GM13976 (cell line): ENCODE measurements at regions of chr5 and their contacts with region 1.

Region 1: DNA sequence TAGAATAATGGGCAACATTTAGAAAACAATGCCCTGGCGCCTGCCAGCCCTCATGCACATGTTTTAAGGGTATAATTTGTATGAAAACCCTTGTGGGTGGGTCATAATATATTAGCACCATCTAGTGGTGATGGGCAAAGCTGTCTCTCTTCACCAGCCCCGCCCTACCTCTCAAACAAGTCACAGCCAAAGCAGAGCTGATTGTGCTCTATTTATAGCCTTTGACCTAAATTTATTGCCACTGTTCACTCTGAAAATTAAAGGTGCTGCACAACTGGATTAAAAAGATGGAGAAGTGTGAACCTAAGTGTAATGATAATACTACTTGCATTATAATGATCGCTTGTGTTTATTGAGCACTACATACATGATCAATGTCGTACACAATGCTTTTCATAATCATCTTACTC is 131.9 kb upstream of the ANKH start:
- DNase-seq: peak; percentile 65
- CTCF ChIP-seq: peak; percentile 74

Region 2: GRCh38 chr5:14720236-14720971 is 283.1 kb before region 1 on chr5:
- in situ Hi-C with region 1: loop called (anchors 5 kb)
- DNase-seq: no peak
- CTCF ChIP-seq: no peak

Region 3: GRCh38 chr5:14946815-14947640 is 56.5 kb before region 1 on chr5:
- in situ Hi-C with region 1: no loop called
- DNase-seq: peak; percentile 34
- CTCF ChIP-seq: no peak

Region 4: GRCh38 chr5:15132434-15133405 is 129.2 kb after region 1 on chr5:
- in situ Hi-C with region 1: no loop called
- DNase-seq: no peak
- CTCF ChIP-seq: no peak

Region 5: DNA sequence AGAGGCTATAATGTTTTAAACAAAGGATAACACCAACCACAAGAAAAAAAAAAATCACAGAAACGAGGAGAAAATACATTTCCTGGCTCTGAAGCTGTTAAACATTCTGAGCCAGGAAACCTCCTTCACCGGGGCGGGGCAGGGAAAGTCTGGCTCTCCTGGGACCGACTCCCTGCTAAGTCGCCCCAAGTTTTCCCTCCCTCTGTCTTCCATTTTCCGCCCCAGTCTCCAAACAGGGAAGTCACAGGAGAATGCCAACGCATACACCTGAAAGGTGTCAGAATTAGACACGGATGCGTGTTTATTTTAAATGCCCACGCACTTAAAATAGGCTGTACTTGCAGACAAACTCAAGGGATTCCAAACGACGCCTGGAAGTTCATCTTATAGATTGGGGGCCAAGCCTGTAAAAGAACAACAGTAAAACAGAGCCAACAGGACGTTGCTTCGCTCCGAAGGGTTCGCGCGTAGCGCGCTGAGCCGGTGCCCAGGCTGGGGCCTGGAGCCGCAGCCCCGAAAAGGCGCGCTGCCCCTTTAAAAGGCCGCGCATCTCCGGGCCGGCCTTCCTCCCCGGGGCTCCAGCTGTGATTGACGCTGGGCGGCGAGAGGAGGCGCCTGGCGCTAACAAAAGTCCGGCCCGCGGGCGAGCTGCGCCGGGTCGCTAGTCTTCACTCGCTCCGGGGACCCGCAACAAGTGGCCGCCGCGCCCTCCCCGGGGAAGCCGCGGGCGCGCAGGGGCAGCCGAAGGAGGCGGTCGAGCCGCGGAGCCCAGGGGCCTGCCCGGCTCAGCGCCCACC is 496.2 kb after region 1 on chr5 and contains the start of gene FBXL7:
- in situ Hi-C with region 1: no loop called
- DNase-seq: peak; percentile 39
- CTCF ChIP-seq: no peak

Region 6: DNA sequence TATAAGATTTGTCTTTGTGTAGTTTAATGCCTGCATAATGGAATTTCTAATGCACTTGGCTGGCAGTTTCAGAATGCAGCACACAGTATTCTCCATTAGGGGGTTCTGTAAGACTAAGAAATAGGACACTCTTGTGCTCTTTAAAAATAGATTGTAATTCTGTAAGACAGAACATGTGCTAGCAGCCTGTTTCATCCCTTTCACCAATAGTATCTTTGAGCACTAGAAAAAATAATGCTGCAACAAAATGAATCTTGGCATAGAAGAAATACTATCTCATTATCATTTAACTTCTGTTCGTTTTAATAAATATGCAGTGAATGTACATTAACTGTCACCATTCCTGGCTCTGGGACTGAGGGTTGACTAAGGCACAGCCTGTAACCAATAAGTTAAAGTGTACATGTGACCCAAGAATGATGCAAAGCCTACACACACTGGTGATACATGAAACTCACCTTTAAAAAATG is 1485.8 kb after region 1 on chr5:
- in situ Hi-C with region 1: no loop called
- DNase-seq: no peak
- CTCF ChIP-seq: peak; percentile 43